ENCODE measurements at regions of chr6 and their contacts with region 1.

Region 1: DNA sequence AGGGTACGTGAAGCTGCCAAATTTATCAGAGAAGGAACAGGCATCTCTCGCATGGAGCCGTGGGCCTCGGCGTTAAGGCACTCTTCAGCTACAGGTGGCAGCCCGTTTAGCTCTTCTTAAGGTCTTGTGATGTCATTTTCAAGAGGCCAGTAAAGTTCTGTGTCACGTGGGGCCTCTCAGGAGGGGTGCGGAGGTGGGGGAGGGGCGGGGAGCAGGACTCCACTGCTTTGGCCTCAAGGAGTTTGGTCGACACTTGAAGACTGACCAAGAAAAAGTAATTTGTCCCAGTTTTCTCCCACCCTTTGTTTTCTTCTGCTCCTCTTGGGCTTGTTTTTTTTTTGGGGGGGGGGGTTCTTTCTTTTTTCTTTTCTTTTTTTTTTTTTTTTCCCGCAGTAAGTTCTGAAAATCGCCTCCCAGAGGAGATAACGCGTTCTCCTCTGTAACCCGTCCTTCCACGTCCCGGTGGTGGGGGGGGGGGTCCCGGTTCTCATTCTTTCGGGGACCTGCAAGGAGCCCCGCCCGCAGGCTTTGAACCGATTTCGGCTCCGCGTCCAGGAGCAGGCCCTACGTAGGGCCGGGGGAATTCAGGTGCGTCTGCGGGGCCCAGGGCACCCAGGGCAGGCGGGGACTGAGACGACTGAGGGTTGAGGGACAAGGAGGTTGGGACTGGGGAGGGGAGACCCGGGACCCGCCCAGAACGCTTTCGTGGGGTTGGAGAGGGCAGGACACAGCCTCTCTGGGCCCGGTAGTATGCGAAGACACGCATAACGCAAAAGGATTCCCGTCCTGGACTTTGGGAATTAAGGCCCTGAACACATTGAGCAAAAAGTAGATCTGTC is 26.0 kb downstream of the GPX6 start:
- DNase-seq: peak; percentile 74
- ATAC-seq: peak; percentile 90
- H3K4me3 ChIP-seq: peak overlapping the region; percentile 58
- H3K27ac ChIP-seq: no peak overlapping the region; the same call in 1 of the 2 replicates
- H3K4me1 ChIP-seq: no peaks in the 10 kb centered on the region
- H3K27me3 ChIP-seq: no peaks in the 10 kb centered on the region; the same call in 1 of the 2 replicates
- CTCF ChIP-seq: no peak
- POLR2A ChIP-seq: no peak
- RAD21 ChIP-seq: no peak

Region 2: GRCh38 chr6:28443112-28443773 is 46.3 kb before region 1 on chr6 and contains the start of gene ZSCAN23:
- CTCF ChIA-PET with region 1: no interaction called
- POLR2A ChIA-PET with region 1: no interaction called
- dilution Hi-C with region 1: no loop called
- in situ Hi-C with region 1: no loop called
- intact Hi-C with region 1: no loop called
- DNase-seq: peak; percentile 92
- ATAC-seq: peak; percentile 91
- H3K4me3 ChIP-seq: peak within 1 kb of the TSS; percentile 91
- H3K27ac ChIP-seq: peak within 1 kb of the TSS; percentile 52
- H3K4me1 ChIP-seq: no peaks in the 10 kb centered on the region
- H3K27me3 ChIP-seq: no peaks in the 10 kb centered on the region
- CTCF ChIP-seq: no peak
- POLR2A ChIP-seq: peak; percentile 94
- RAD21 ChIP-seq: no peak
- total RNA-seq, gene ZSCAN23: 5.3 and 8.4 TPM in 2 replicates

Region 3: DNA sequence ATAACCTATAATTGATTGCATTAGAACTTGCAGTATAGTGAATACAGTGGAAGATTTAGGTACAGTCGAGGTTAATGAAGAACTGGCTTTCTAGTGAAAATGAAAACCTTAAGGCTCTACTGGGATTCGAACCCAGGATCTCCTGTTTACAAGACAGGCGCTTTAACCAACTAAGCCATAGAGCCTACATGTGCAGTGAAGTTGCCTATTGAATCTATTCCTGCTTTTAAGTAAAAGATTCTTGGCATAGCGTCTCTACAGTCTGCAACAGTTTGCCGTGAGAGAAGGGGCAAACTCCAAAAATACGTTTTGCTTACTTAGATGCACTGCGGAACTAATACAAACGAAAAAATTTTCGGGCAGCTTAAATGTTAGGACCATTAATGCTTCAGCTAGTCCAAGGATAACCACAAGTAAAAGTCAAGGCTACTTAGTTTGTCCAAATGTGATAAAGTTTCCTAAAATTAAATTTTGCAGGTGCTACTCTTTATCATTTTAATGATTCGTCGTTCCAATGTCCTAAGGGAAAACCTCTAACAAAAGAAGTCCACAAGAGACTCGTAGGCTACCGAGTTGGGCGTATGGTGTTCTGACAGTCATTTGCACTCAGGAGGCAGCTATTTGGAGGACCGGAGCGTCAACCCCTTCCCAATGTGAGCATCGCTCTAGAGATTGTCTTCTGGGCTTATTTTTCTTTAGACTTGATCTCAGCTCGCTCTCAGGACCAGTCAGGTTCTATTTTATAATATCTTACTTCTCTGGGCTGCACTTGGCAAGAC is 15.0 kb before region 1 on chr6:
- CTCF ChIA-PET with region 1: interaction called, 3 read pairs
- POLR2A ChIA-PET with region 1: no interaction called
- dilution Hi-C with region 1: no loop called
- in situ Hi-C with region 1: no loop called
- intact Hi-C with region 1: loop called (anchors 2 kb)
- DNase-seq: peak; percentile 92
- ATAC-seq: peak; percentile 98
- H3K4me3 ChIP-seq: peak overlapping the region; percentile 72
- H3K27ac ChIP-seq: no peak overlapping the region
- H3K4me1 ChIP-seq: no peaks in the 10 kb centered on the region
- H3K27me3 ChIP-seq: peaks cover 7% of the 10 kb centered on the region
- CTCF ChIP-seq: no peak
- POLR2A ChIP-seq: no peak
- RAD21 ChIP-seq: no peak

Region 4: GRCh38 chr6:28542440-28543296 is 53.1 kb after region 1 on chr6:
- CTCF ChIA-PET with region 1: interaction called, 3 read pairs
- POLR2A ChIA-PET with region 1: no interaction called
- dilution Hi-C with region 1: no loop called
- in situ Hi-C with region 1: no loop called
- intact Hi-C with region 1: loop called (anchors 2 kb)
- DNase-seq: peak; percentile 91
- ATAC-seq: peak; percentile 96
- H3K4me3 ChIP-seq: peak overlapping the region; percentile 6; the same call in 1 of the 2 replicates
- H3K27ac ChIP-seq: no peak overlapping the region
- H3K4me1 ChIP-seq: no peaks in the 10 kb centered on the region
- H3K27me3 ChIP-seq: no peaks in the 10 kb centered on the region
- CTCF ChIP-seq: peak; percentile 35
- POLR2A ChIP-seq: no peak
- RAD21 ChIP-seq: peak; percentile 10; the same call in 1 of the 2 replicates

Region 5: GRCh38 chr6:28648035-28648877 is 158.7 kb after region 1 on chr6:
- CTCF ChIA-PET with region 1: no interaction called
- POLR2A ChIA-PET with region 1: no interaction called
- dilution Hi-C with region 1: no loop called
- in situ Hi-C with region 1: no loop called
- intact Hi-C with region 1: loop called (anchors 5 kb)
- DNase-seq: peak; percentile 74
- ATAC-seq: peak; percentile 86
- H3K4me3 ChIP-seq: peak overlapping the region; percentile 92
- H3K27ac ChIP-seq: no peak overlapping the region
- H3K4me1 ChIP-seq: no peaks in the 10 kb centered on the region
- H3K27me3 ChIP-seq: no peaks in the 10 kb centered on the region
- CTCF ChIP-seq: no peak
- POLR2A ChIP-seq: no peak
- RAD21 ChIP-seq: no peak